Tibial artery (tissue), 4 donors: ENCODE measurements at regions of chr12 and their contacts with region 1.

Region 1: DNA sequence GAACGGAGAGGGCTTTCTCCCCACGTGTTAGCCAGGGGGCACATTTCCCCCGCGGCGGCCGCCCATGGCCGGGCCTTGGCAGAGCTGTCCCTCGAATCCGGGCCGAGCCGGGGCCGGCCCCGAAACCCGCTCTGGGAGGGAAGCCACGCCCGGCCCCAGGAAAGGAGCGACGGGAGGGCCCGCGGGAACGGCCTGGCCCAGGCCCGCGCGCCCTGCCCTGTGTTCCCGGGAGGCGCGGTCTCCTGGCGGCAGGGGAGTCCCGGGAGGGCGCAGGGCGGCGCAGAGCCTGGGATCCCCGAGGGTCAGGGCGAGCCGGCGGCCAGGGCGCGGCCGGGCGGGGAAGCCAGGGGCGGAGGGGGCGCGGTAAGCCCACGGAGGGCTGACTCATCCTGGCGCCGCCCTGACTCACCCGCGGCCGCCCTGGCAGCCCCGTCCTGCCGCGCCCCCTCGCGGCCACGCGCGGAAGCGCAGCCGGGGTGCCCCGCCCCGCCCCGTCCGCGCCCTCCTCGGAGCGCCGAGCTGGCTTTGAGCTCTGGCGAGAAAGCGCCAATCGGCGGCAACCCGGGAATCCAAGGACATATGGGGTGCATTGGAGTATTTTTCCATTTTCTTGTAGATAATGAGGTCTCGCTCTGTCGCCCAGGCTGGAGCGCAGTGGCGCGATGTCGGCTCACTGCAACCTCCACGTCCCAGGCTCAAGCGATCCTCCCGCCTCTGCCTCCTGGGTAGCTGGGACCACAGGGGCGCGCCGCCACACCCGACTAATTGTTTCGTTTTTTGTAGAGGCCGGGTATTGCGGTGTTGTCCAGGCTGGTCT is 31.8 kb upstream of the PLEKHG6 start:
- DNase-seq: peak; percentile 78 to 95
- H3K4me3 ChIP-seq: peak overlapping the region; percentile 49 to 60
- H3K27ac ChIP-seq: peak overlapping the region; percentile 77 to 82
- H3K4me1 ChIP-seq: peaks cover 0 to 33% (median 27%) of the 10 kb centered on the region in 4 donors
- H3K27me3 ChIP-seq: no peaks in the 10 kb centered on the region
- CTCF ChIP-seq: peak; percentile 84 to 100

Region 2: DNA sequence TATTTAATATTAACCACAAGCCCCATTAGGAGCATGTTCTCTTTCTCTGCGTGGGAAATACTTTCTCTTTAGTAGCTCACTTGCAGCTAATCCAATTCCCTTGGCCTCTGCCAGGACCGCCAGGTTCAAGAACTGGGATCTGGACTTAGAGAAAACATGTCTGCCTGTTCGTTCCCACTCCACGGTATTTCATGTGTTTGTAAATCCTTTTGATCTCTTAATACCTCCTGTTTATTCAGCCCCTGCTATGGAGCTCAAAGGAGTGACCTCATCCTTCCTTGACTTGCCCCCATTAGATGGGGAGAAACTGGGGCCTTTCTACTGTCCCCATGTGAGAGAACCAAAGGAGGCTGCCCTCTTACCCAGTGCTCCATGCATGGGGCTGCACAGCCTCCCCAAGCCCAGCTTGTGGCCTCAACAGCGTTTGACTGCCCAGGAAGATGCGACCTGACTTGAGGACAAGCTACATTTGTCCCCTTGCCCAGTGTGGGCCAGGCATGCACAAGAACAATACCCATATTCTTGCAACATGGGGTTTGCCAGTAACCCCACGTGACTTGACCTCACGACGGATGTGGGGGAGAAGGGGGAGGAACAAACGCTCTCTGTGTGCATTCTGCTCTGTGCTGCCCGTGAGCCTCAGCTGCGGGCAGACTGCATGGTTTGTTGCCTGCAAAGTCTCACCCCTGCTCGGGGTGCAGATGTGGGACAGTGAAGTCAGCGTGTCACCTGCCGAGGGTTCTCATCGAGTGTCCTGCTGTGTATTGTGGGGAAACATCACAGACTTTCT is 48.1 kb before region 1 on chr12:
- intact Hi-C with region 1: loop called (anchors 5 kb)
- DNase-seq: peak; percentile 69 to 83
- H3K4me3 ChIP-seq: peak overlapping the region in 1 of 2 donors; percentile 26
- H3K27ac ChIP-seq: peak overlapping the region; percentile 85 to 92
- H3K4me1 ChIP-seq: peaks cover 6 to 86% (median 78%) of the 10 kb centered on the region in 4 donors
- H3K27me3 ChIP-seq: no peaks in the 10 kb centered on the region
- CTCF ChIP-seq: no peak

Region 3: DNA sequence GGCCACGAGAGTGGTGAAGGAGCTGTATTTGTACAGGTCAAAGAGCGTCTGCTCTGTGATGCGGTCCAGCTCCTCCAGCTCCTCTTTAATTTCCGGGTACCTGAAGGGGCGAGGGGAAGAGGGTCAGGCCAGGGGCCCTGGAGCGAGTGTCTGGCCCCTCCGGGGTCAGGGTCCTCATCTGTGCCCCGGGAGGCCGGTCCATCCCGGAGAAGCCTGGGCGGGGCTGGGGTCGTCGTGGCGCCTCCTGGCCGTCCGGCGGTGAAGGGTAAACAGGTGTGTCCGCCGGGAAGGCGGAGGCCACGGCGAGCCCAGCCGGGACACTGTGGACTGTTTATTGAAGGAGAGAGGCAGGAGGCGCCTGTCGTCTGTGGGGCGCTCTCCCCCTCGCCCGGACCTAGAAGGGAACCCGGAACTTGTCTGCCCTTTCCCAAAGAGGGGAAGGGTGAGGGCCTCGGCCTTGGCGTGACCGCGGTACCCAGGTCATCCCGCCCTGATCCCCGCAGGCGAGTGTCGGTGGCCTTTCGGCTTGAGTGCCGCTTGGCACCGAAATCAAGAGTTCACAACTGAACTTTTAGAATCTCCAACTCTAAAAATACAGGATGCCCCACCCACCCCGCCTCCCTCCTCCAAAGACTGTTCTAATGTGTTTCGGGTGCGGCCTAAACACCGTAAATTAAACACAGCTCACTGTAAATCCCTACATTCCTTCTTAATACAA is 85.1 kb after region 1 on chr12:
- intact Hi-C with region 1: no loop called
- DNase-seq: peak in 1 of 2 donors; percentile 70
- H3K4me3 ChIP-seq: peak overlapping the region; percentile 46 to 64
- H3K27ac ChIP-seq: peak overlapping the region; percentile 63 to 72
- H3K4me1 ChIP-seq: peaks cover 0 to 30% (median 15%) of the 10 kb centered on the region in 4 donors
- H3K27me3 ChIP-seq: no peaks in the 10 kb centered on the region
- CTCF ChIP-seq: no peak